ENCODE measurements at regions of chr10 and their contacts with region 1.

Region 1: DNA sequence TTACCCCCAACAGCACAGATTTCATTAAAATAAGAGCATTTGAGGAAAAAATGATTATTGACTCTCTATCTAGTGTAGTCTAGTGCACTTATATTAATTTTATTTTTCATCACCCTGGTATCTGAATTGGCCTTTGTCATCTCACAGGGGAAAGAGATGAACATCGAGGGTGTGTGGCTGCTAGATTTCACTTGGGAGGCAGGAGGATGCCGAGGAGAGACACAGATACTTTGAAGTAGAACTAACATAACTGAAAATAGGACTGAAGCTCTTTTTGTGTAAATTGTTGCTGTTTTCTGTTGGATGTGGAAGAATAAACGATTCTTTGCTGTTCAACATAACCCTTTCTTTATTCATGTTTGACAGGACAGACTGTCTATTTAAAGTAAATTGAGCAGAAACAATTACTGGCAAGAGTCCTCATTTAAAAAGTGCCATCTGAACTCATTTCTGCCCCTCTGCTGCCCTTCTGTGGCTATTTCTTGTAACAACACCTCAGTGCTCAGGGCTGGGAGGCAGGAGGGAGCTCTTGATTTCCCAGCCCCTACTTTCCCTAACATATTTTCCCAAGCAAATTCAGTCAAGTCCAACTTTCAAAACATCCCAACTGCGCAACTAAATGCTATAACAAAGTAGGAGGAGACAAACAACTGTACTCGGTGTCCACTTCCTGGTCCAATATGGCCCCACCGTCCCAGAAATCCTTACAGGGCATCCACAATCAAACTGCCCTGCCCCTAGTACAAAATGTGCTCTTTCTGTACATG is 15.6 kb downstream of the LYZL1 start:
- DNase-seq: peak; percentile 41
- H3K4me3 ChIP-seq: no peak overlapping the region
- H3K27ac ChIP-seq: no peak overlapping the region
- H3K4me1 ChIP-seq: no peaks in the 10 kb centered on the region
- H3K27me3 ChIP-seq: no peaks in the 10 kb centered on the region
- CTCF ChIP-seq: peak; percentile 61 to 77 (median 68)
- EP300 ChIP-seq: no peak
- POLR2A ChIP-seq: no peak

Region 2: DNA sequence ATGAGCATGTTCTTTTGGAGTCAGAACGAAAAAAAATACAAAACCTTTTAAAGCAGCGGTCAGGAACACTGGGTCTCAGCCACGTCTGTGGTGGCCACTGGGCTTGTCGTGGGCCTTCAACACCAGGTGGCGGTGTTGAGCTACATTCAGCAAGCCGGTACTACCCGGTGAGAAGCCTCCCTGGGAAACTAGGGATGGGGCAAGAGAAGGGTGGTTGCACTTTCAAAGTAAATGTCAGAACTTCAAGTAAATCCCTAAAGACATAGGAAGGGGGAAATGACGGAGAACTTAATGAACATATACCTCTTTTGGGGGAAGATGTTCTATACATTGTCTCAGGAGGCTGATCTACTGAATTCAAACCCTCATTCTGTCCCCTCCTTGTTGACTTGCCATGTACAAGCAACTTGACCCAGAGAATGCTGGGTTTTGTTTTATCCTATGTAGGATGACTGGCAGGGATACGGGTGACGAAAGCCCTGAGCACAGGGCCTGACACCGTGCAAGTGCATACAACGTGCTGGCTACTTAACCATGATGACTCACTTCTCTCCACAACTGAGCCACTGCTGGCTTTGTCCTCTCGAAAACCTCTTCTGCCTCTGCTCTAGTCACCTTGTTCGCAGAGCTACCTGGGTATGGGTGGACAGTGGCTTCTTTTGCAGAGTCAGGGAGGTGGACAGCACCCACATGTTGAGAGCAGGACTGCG is 676.1 kb before region 1 on chr10:
- in situ Hi-C with region 1: loop called in 1 of 4 experiments (anchors 25 kb)
- intact Hi-C with region 1: no loop called
- DNase-seq: peak; percentile 81
- H3K4me3 ChIP-seq: no peak overlapping the region
- H3K27ac ChIP-seq: no peak overlapping the region
- H3K4me1 ChIP-seq: no peaks in the 10 kb centered on the region
- H3K27me3 ChIP-seq: peaks cover 5% of the 10 kb centered on the region
- CTCF ChIP-seq: peak; percentile 64 to 88 (median 85)
- EP300 ChIP-seq: no peak
- POLR2A ChIP-seq: no peak

Measured in transverse colon (tissue), 4 donors.